Caco-2 (cell line): ENCODE measurements at regions of chr17 and their contacts with region 1.

Region 1: GRCh38 chr17:50547035-50547735 is at the start of gene SPATA20:
- DNase-seq: peak; percentile 99
- H3K4me3 ChIP-seq: peak within 1 kb of the TSS; percentile 57
- H3K4me3 Mint-ChIP-seq: peak within 1 kb of the TSS; percentile 80
- H3K27ac Mint-ChIP-seq: peak within 1 kb of the TSS; percentile 72
- H3K4me1 ChIP-seq: peaks cover 38% of the 10 kb centered on the region
- H3K4me1 Mint-ChIP-seq: peaks cover 43% of the 10 kb centered on the region
- H3K27me3 ChIP-seq: no peaks in the 10 kb centered on the region
- H3K27me3 Mint-ChIP-seq: no peaks in the 10 kb centered on the region
- CTCF ChIP-seq: peak; percentile 100
- total RNA-seq, gene SPATA20: 149 and 176 TPM in 2 replicates

Region 2: GRCh38 chr17:50560185-50560824 is 13.1 kb after region 1 on chr17 and contains the start of gene CACNA1G:
- CTCF ChIA-PET with region 1: interaction called, 92 read pairs
- POLR2A ChIA-PET with region 1: interaction called, 14 read pairs
- intact Hi-C with region 1: loop called (anchors 1 kb)
- DNase-seq: peak; percentile 97 to 100
- H3K4me3 ChIP-seq: peak within 1 kb of the TSS; percentile 41
- H3K4me3 Mint-ChIP-seq: peak within 1 kb of the TSS; percentile 87
- H3K27ac Mint-ChIP-seq: peak within 1 kb of the TSS; percentile 52
- H3K4me1 ChIP-seq: peaks cover 16% of the 10 kb centered on the region
- H3K4me1 Mint-ChIP-seq: peaks cover 7% of the 10 kb centered on the region
- H3K27me3 ChIP-seq: peaks cover 12% of the 10 kb centered on the region
- H3K27me3 Mint-ChIP-seq: peaks cover 16% of the 10 kb centered on the region
- CTCF ChIP-seq: no peak
- total RNA-seq, gene CACNA1G: 1.4 and 1.6 TPM in 2 replicates

Region 3: GRCh38 chr17:50638851-50639767 is 91.9 kb after region 1 on chr17:
- CTCF ChIA-PET with region 1: interaction called, 15 read pairs
- POLR2A ChIA-PET with region 1: no interaction called
- intact Hi-C with region 1: no loop called
- DNase-seq: peak; percentile 13 to 83
- H3K4me3 ChIP-seq: no peak overlapping the region
- H3K4me3 Mint-ChIP-seq: no peak overlapping the region
- H3K27ac Mint-ChIP-seq: peak overlapping the region; percentile 1
- H3K4me1 ChIP-seq: peaks cover 69% of the 10 kb centered on the region
- H3K4me1 Mint-ChIP-seq: peaks cover 31% of the 10 kb centered on the region
- H3K27me3 ChIP-seq: no peaks in the 10 kb centered on the region
- H3K27me3 Mint-ChIP-seq: no peaks in the 10 kb centered on the region
- CTCF ChIP-seq: no peak

Region 4: GRCh38 chr17:50681263-50682210 is 134.4 kb after region 1 on chr17:
- CTCF ChIA-PET with region 1: interaction called, 13 read pairs
- POLR2A ChIA-PET with region 1: interaction called, 7 read pairs
- intact Hi-C with region 1: loop called (anchors 1 kb)
- DNase-seq: peak; percentile 88 to 89
- H3K4me3 ChIP-seq: no peak overlapping the region
- H3K4me3 Mint-ChIP-seq: peak overlapping the region; percentile 14
- H3K27ac Mint-ChIP-seq: peak overlapping the region; percentile 66
- H3K4me1 ChIP-seq: peaks cover 73% of the 10 kb centered on the region
- H3K4me1 Mint-ChIP-seq: peaks cover 58% of the 10 kb centered on the region
- H3K27me3 ChIP-seq: no peaks in the 10 kb centered on the region
- H3K27me3 Mint-ChIP-seq: no peaks in the 10 kb centered on the region
- CTCF ChIP-seq: peak; percentile 94

Region 5: GRCh38 chr17:50707289-50708049 is 160.3 kb after region 1 on chr17 and contains the start of gene ANKRD40:
- CTCF ChIA-PET with region 1: interaction called, 18 read pairs
- POLR2A ChIA-PET with region 1: no interaction called
- intact Hi-C with region 1: no loop called
- DNase-seq: peak; percentile 95 to 99
- H3K4me3 ChIP-seq: peak within 1 kb of the TSS; percentile 68
- H3K4me3 Mint-ChIP-seq: peak within 1 kb of the TSS; percentile 97
- H3K27ac Mint-ChIP-seq: peak within 1 kb of the TSS; percentile 79
- H3K4me1 ChIP-seq: peaks cover 15% of the 10 kb centered on the region
- H3K4me1 Mint-ChIP-seq: peaks cover 31% of the 10 kb centered on the region
- H3K27me3 ChIP-seq: no peaks in the 10 kb centered on the region
- H3K27me3 Mint-ChIP-seq: no peaks in the 10 kb centered on the region
- CTCF ChIP-seq: no peak
- total RNA-seq, gene ANKRD40: 113 and 114 TPM in 2 replicates

Region 6: DNA sequence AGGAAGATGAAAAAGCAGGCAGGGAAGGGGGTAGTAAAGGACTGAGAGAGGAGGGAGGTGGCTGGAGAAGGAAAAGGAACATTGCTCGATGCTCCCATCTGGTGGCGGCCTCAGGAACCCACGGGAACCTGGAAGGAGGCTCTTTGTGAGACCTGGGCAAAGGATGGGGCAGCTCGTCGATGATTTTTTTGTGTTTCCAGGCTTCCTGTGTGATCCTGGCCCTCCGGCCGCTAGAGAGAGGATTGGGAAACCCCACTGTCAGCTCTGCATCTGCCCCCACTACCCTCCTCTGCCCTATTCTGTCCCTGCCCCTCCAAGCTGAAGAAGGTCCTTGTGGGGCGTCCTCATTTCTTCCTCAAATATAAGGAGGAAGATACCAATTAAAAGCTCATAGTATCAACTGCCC is 294.8 kb after region 1 on chr17:
- CTCF ChIA-PET with region 1: interaction called, 4 read pairs
- POLR2A ChIA-PET with region 1: interaction called, 3 read pairs
- intact Hi-C with region 1: loop called (anchors 1 kb)
- DNase-seq: peak; percentile 89 to 94
- H3K4me3 ChIP-seq: no peak overlapping the region
- H3K4me3 Mint-ChIP-seq: no peak overlapping the region
- H3K27ac Mint-ChIP-seq: no peak overlapping the region
- H3K4me1 ChIP-seq: peaks cover 23% of the 10 kb centered on the region
- H3K4me1 Mint-ChIP-seq: peaks cover 10% of the 10 kb centered on the region
- H3K27me3 ChIP-seq: no peaks in the 10 kb centered on the region
- H3K27me3 Mint-ChIP-seq: no peaks in the 10 kb centered on the region
- CTCF ChIP-seq: peak; percentile 98 to 99